HEK293 (cell line): ENCODE measurements at regions of chr1 and their contacts with region 1.

Region 1: GRCh38 chr1:240732390-240732789 is 120.4 kb upstream of the GREM2 start:
- H3K4me3 ChIP-seq: no peak overlapping the region
- H3K27ac ChIP-seq: no peak overlapping the region
- H3K4me1 ChIP-seq: no peaks in the 10 kb centered on the region
- CTCF ChIP-seq: peak; percentile 90

Region 2: GRCh38 chr1:240803151-240803550 is 70.8 kb after region 1 on chr1:
- CTCF ChIA-PET with region 1: interaction called, 10 read pairs
- POLR2A ChIA-PET with region 1: no interaction called
- H3K4me3 ChIP-seq: no peak overlapping the region
- H3K27ac ChIP-seq: no peak overlapping the region
- H3K4me1 ChIP-seq: peaks cover 5% of the 10 kb centered on the region; the same call in 1 of the 2 replicates
- CTCF ChIP-seq: no peak

Region 3: DNA sequence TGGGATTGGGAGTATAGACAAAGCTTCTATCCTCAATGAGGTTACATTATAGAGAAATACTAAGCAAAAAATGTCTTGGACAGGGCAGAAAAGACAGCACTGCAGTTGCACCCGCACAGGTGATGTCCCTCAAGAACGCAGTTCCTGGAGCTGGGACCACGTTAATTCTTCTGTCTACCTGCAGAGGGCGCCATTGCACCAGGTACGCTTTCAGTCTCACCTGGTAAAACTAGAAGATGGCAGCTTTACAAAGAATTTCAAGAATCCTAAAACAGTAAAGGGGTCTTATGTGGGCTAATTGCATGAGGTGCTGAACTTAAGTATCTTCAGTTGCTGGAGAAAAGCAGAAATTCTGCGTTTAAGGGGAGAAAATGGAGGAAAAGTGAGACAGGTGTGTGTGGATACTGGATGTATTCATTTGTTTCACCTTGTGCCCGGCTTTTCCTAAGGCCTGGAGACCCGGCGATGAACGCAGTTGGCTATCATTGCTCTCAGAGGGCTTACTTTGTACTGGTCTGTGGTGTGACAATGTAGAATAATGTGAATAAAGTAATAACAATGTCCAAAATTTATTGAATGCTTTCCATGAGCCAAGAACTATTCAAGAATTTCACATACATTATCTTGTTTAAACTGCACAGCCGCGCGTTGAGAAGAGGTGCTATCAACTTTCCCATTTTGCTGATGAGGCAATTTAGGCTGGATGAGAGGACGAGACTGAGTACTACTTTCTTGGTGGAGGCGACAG is 155.8 kb after region 1 on chr1:
- CTCF ChIA-PET with region 1: interaction called, 19 read pairs
- POLR2A ChIA-PET with region 1: no interaction called
- H3K4me3 ChIP-seq: no peak overlapping the region
- H3K27ac ChIP-seq: no peak overlapping the region
- H3K4me1 ChIP-seq: no peaks in the 10 kb centered on the region
- CTCF ChIP-seq: peak; percentile 87

Region 4: GRCh38 chr1:240941701-240942370 is 209.4 kb after region 1 on chr1:
- CTCF ChIA-PET with region 1: interaction called, 26 read pairs
- POLR2A ChIA-PET with region 1: no interaction called
- H3K4me3 ChIP-seq: no peak overlapping the region
- H3K27ac ChIP-seq: no peak overlapping the region
- H3K4me1 ChIP-seq: no peaks in the 10 kb centered on the region
- CTCF ChIP-seq: no peak

Region 5: DNA sequence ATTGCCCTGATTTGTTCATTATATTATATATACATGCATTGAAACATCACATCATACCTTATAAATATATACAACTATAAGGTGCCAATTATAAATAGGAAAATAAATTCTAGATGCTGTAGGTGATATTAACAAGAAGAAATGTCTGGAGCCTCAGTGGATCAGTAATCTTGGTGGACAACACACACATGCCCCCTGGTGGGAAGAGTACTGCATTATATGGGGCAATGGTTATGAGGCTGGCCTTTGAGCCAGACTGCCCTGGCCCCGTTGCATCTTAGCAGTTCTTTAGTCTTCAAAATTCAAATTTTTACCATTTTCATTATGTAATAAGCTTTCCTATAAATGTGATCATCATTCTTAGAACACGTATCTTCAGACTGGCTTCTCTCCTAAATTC is 214.5 kb after region 1 on chr1:
- CTCF ChIA-PET with region 1: interaction called, 26 read pairs
- POLR2A ChIA-PET with region 1: interaction called, 5 read pairs
- H3K4me3 ChIP-seq: no peak overlapping the region
- H3K27ac ChIP-seq: no peak overlapping the region
- H3K4me1 ChIP-seq: no peaks in the 10 kb centered on the region
- CTCF ChIP-seq: peak; percentile 34; the same call in 1 of the 2 replicates

Region 6: GRCh38 chr1:240967070-240967724 is 234.8 kb after region 1 on chr1:
- CTCF ChIA-PET with region 1: interaction called, 10 read pairs
- POLR2A ChIA-PET with region 1: no interaction called
- H3K4me3 ChIP-seq: no peak overlapping the region
- H3K27ac ChIP-seq: no peak overlapping the region
- H3K4me1 ChIP-seq: no peaks in the 10 kb centered on the region
- CTCF ChIP-seq: no peak